WTC11 (cell line): ENCODE measurements at regions of chr10 and their contacts with region 1.

Region 1: DNA sequence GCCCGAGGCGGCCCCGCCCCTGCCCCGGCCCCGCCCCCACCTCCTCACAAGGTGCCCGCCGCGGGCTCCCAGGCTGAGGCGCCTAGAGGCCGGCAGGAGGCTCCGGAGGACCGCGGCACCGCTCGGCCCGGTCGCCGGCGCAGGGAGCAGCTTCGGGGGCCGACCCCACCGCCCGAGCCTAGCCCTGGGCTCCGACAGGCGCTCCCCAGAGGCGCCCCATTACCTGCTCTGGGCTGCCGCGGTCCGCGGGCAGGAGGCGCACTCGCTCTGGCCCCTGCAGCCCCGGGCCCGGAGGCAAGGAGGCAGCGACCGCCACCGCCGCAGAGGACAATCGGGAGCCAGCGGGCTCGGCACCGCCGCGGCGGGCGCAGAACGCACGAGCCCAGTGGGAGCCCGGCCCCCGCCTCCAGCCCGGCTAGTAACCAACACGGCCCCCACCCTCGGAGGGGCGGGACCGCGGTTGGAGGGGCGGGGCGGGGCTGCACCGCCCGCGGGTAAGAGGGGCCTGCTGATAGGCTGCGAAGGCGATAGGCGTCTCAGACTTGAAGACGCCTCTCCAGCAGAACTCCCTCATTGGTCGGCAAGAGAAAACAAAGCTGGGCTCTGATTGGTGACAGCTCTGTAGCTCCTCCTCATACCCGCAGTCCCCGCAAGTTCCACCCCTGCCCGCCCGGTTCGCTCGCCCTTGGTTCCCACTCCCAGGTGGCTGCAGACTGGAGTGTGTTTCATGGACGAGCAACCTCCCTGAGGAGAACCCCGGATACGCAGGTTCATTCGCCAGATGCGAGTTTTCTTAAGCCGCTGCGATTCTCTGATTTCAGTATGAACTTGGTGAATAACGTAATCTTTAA is at the start of gene MPP7:
- DNase-seq: peak; percentile 95
- ATAC-seq: peak; percentile 97
- H3K4me3 Mint-ChIP-seq: peak within 1 kb of the TSS; percentile 96
- H3K27ac Mint-ChIP-seq: peak within 1 kb of the TSS; percentile 97
- H3K4me1 Mint-ChIP-seq: peaks cover 24% of the 10 kb centered on the region
- H3K27me3 Mint-ChIP-seq: peaks cover 33% of the 10 kb centered on the region
- CTCF ChIP-seq: no peak
- total RNA-seq, gene MPP7: 7.7 to 9.8 TPM (median 9.1 TPM) in 3 replicates

Region 2: GRCh38 chr10:28241741-28242399 is 61.0 kb before region 1 on chr10:
- CTCF ChIA-PET with region 1: interaction called, 13 read pairs
- POLR2A ChIA-PET with region 1: no interaction called
- DNase-seq: peak; percentile 28
- ATAC-seq: peak; percentile 81
- H3K4me3 Mint-ChIP-seq: no peak overlapping the region
- H3K27ac Mint-ChIP-seq: no peak overlapping the region
- H3K4me1 Mint-ChIP-seq: peaks cover 4% of the 10 kb centered on the region; the same call in 1 of the 2 replicates
- H3K27me3 Mint-ChIP-seq: no peaks in the 10 kb centered on the region
- CTCF ChIP-seq: peak; percentile 88

Region 3: DNA sequence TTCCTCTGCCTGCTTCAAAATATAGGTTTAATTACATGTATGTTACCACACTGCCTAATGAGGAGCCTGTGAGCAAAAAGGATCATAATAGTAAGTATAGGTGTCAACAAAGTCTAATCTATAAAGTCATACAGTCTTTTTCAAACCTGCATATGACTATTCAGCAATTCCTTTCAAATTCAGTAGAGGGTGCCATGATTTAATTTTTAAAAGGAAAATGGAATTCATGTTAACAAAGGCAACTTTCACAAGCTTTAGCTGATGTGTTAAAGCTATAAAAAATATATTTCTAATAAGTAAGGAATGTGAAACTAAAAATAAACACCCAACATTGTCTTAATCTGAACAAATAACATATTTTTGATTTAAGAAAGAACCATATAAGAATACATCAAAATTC is 52.1 kb before region 1 on chr10:
- CTCF ChIA-PET with region 1: interaction called, 10 read pairs
- POLR2A ChIA-PET with region 1: no interaction called
- DNase-seq: no peak
- ATAC-seq: no peak
- H3K4me3 Mint-ChIP-seq: no peak overlapping the region
- H3K27ac Mint-ChIP-seq: no peak overlapping the region
- H3K4me1 Mint-ChIP-seq: peaks cover 7% of the 10 kb centered on the region
- H3K27me3 Mint-ChIP-seq: no peaks in the 10 kb centered on the region
- CTCF ChIP-seq: no peak

Region 4: GRCh38 chr10:28326516-28327490 is 23.9 kb after region 1 on chr10:
- CTCF ChIA-PET with region 1: interaction called, 12 read pairs
- POLR2A ChIA-PET with region 1: interaction called, 4 read pairs
- DNase-seq: no peak
- ATAC-seq: peak; percentile 88
- H3K4me3 Mint-ChIP-seq: no peak overlapping the region
- H3K27ac Mint-ChIP-seq: peak overlapping the region; percentile 87
- H3K4me1 Mint-ChIP-seq: peaks cover 18% of the 10 kb centered on the region
- H3K27me3 Mint-ChIP-seq: no peaks in the 10 kb centered on the region
- CTCF ChIP-seq: no peak

Region 5: DNA sequence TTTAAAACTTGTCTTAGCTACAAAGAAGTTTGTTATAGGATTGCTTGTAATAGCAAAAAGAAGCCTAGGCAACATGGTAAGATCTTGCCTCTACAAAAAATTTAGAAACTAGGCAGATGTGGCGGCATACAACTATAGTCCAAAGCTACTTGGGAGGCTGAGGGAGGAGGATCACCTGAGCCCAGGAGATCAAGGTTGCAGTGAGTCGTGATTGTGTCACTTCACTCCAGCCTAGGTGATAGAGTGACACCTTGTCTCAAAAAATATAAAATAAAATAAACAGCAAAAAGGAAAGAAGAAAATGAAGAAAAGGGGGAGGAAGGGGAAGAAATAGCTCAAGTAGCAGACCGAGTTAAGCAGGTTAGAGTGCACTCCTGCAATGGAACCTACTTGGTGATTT is 47.0 kb after region 1 on chr10:
- CTCF ChIA-PET with region 1: interaction called, 12 read pairs
- POLR2A ChIA-PET with region 1: no interaction called
- DNase-seq: no peak
- ATAC-seq: no peak
- H3K4me3 Mint-ChIP-seq: no peak overlapping the region
- H3K27ac Mint-ChIP-seq: no peak overlapping the region
- H3K4me1 Mint-ChIP-seq: no peaks in the 10 kb centered on the region
- H3K27me3 Mint-ChIP-seq: no peaks in the 10 kb centered on the region
- CTCF ChIP-seq: no peak

Region 6: DNA sequence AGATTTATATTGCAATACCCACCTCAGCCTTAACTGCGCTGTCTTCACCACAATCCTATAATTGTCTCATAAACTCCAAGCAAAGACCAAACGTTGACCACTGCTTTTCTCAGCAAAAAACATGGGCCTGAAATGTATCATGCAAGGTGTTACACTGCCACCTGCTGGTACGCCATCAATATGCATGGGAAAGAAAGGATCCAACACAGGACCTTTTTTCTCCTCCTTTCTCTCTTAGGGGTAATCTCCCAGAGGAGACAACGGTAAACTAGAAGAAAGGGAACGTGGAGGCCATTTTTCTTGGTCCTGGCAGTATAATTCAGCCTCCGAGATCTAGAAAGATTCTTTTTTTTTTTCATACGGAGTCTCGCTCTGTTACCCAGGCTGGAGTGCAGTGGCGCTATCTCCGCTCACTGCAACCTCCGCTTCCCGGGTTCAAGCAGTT is 79.1 kb after region 1 on chr10:
- CTCF ChIA-PET with region 1: interaction called, 22 read pairs
- POLR2A ChIA-PET with region 1: interaction called, 4 read pairs
- DNase-seq: peak; percentile 88
- ATAC-seq: peak; percentile 95
- H3K4me3 Mint-ChIP-seq: peak overlapping the region; percentile 15; the same call in 1 of the 2 replicates
- H3K27ac Mint-ChIP-seq: no peak overlapping the region
- H3K4me1 Mint-ChIP-seq: no peaks in the 10 kb centered on the region
- H3K27me3 Mint-ChIP-seq: no peaks in the 10 kb centered on the region
- CTCF ChIP-seq: peak; percentile 87

Region 7: DNA sequence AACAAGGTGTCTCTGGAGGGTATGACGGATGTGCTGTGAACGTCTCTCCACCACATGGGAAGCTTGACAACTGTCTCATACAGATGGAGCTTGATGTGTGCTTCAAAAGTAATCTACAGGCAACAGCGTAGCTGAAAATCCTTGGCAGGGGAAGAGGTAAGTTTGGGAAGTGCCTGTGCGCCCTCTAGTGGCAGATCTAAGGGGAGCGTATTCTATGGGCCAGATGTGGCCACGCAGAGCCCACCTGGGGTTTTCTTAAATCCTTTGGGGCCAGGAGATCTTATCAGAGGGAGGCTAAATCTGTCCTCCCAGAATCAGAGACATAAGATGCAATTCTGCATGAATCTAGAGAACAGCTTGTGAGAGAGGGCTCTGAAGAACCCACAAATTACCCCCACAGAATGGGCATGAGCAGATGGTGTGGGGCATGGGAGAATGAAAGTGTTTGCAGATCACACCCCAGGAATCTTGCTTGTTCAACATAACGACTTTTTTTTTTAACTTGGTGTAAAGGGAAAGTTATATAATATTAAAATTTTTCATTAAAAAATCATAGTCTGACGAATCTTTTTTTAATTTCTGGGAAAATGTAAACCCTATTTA is 91.2 kb after region 1 on chr10:
- CTCF ChIA-PET with region 1: interaction called, 21 read pairs
- POLR2A ChIA-PET with region 1: no interaction called
- DNase-seq: peak; percentile 76
- ATAC-seq: peak; percentile 98
- H3K4me3 Mint-ChIP-seq: no peak overlapping the region
- H3K27ac Mint-ChIP-seq: no peak overlapping the region
- H3K4me1 Mint-ChIP-seq: peaks cover 2% of the 10 kb centered on the region; the same call in 1 of the 2 replicates
- H3K27me3 Mint-ChIP-seq: no peaks in the 10 kb centered on the region
- CTCF ChIP-seq: peak; percentile 90